ENCODE measurements at regions of chr7 and their contacts with region 1.

Region 1: DNA sequence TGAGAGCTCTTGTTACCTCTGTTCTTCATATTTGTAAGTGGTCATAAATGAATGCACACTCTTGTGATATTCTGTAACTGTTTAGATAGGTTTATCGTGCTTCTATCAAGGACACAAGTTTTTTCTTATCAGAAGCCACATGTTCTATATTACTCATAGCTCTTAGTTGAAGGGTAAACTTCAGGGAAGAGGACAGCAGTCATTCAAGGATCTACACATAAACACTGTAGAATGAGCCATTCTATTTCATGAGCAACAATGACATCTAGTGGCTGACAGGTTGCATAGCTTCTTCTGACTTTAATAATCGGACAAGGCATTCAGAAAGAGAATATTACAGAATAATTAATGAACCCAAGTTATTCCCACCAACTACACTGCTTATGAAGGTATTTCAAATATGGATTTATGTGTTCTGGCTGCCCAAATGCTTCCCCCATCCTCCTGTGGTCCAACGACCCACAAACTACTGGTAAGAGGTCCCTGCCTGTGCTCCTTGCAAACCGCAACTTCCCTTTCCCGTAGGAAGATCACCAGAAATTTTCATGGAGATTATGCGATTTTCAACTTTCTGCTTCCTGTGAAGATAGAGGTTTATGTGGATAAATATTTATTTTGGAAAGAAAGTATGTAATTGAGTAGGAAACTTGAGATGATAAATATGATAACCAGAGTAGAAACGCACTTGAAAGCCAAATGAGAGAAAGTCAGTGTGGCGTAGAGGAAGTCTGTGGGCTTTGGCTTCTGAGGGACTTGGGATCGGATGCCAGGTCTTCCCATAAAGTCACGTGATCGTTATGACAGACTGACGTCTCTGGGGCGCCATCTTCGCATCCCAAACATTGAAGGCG is 16.8 kb upstream of the ABCB5 start:
- DNase-seq: no peak
- H3K4me3 ChIP-seq: no peak overlapping the region
- H3K27ac ChIP-seq: no peak overlapping the region
- H3K4me1 ChIP-seq: no peaks in the 10 kb centered on the region
- H3K27me3 ChIP-seq: no peaks in the 10 kb centered on the region
- CTCF ChIP-seq: peak; percentile 50 to 77 (median 66)
- EP300 ChIP-seq: no peak
- POLR2A ChIP-seq: no peak

Region 2: DNA sequence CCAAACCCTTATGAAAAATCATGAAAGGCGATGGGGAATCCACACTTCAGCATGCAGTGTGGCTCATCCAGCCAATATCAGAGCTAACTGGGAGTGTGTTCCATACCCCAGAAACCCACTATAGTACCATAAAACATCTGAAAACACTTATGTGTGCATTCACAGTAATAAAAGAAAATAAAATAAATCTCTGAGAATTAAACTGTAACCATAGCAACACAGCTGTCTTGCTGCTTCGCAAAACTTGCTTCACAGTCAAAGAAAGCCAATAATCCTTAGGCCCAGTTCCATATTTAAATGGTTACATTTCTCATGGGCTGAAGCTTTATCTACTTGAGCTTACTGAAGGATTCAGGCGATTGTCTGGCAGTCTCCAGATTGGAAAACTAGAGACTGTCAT is 870.0 kb before region 1 on chr7:
- intact Hi-C with region 1: loop called in 1 of 4 experiments (anchors 10 kb)
- DNase-seq: no peak
- H3K4me3 ChIP-seq: no peak overlapping the region
- H3K27ac ChIP-seq: no peak overlapping the region
- H3K4me1 ChIP-seq: no peaks in the 10 kb centered on the region
- H3K27me3 ChIP-seq: no peaks in the 10 kb centered on the region
- CTCF ChIP-seq: no peak
- EP300 ChIP-seq: no peak
- POLR2A ChIP-seq: no peak

Region 3: GRCh38 chr7:19747740-19748339 is 850.8 kb before region 1 on chr7:
- intact Hi-C with region 1: loop called in 1 of 4 experiments (anchors 5 kb)
- DNase-seq: no peak
- H3K4me3 ChIP-seq: no peak overlapping the region
- H3K27ac ChIP-seq: no peak overlapping the region
- H3K4me1 ChIP-seq: no peaks in the 10 kb centered on the region
- H3K27me3 ChIP-seq: no peaks in the 10 kb centered on the region
- CTCF ChIP-seq: peak in 1 of 3 donors; percentile 34
- EP300 ChIP-seq: no peak
- POLR2A ChIP-seq: no peak

Region 4: GRCh38 chr7:19754521-19755116 is 844.1 kb before region 1 on chr7:
- intact Hi-C with region 1: loop called in 2 of 4 experiments (anchors 5 kb)
- DNase-seq: no peak
- H3K4me3 ChIP-seq: no peak overlapping the region
- H3K27ac ChIP-seq: no peak overlapping the region
- H3K4me1 ChIP-seq: no peaks in the 10 kb centered on the region
- H3K27me3 ChIP-seq: no peaks in the 10 kb centered on the region
- CTCF ChIP-seq: peak in 1 of 3 donors; percentile 29
- EP300 ChIP-seq: no peak
- POLR2A ChIP-seq: no peak